Endothelial cell of umbilical vein (primary cell): ENCODE measurements at regions of chr1 and their contacts with region 1.

Region 1: DNA sequence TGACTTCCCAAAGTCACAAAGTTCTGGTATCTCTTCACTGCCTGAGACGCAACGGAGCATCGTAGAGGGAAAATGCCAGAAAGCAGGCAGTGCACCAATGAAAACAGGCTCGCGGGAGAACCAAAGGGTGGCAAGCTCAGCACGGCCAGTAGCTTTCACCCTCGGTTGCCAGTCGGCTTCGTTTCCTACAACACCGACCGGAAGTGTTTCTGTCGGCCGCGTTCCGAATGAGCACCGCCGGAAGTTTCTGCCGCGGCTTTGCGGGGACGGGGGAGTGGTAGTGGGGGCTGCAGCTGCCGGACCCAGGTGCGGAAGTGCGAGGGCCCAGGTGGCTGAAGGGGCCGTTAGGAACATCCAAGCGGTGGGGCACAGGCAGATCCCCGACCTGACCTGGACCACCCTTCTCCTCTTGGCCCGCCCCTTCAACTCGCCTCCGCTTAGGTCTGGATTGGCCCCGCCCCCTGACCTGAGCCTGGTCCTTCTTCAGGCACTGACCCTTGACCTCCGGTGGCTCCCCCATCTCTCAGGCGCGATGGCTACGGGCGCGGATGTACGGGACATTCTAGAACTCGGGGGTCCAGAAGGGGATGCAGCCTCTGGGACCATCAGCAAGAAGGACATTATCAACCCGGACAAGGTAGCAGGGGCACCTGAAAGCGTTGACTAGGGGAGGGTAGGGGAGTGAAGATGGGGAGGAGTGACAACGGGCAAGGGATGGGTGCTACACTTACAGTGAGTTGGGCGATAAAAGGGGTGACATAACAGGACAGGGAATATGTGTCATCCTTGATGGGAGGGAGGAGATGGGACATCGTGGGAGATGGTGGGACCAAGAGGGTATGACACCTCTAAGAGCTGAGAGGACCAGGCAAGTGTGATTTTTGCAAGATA is at the start of gene DMAP1:
- DNase-seq: peak; percentile 81
- H3K4me3 ChIP-seq: peak within 1 kb of the TSS; percentile 64 to 82 (median 76)
- H3K27ac ChIP-seq: no peak within 1 kb of the TSS
- H3K4me1 ChIP-seq: peaks cover 13% of the 10 kb centered on the region
- H3K27me3 ChIP-seq: no peaks in the 10 kb centered on the region
- CTCF ChIP-seq: no peak
- POLR2A ChIP-seq: peak; percentile 69
- total RNA-seq, gene DMAP1: 40.9 and 42.9 TPM in 2 replicates

Region 2: GRCh38 chr1:44002606-44003157 is 210.8 kb before region 1 on chr1:
- CTCF ChIA-PET with region 1: interaction called, 8 read pairs
- POLR2A ChIA-PET with region 1: no interaction called
- dilution Hi-C with region 1: no loop called
- intact Hi-C with region 1: loop called (anchors 10 kb)
- DNase-seq: no peak
- H3K4me3 ChIP-seq: no peak overlapping the region
- H3K27ac ChIP-seq: no peak overlapping the region
- H3K4me1 ChIP-seq: no peaks in the 10 kb centered on the region
- H3K27me3 ChIP-seq: no peaks in the 10 kb centered on the region
- CTCF ChIP-seq: peak in 1 of 2 donors; percentile 26
- POLR2A ChIP-seq: no peak

Region 3: GRCh38 chr1:44237721-44238457 is 24.4 kb after region 1 on chr1:
- CTCF ChIA-PET with region 1: interaction called, 39 read pairs
- POLR2A ChIA-PET with region 1: no interaction called
- dilution Hi-C with region 1: no loop called
- intact Hi-C with region 1: loop called (anchors 2 kb)
- DNase-seq: peak; percentile 40
- H3K4me3 ChIP-seq: no peak overlapping the region
- H3K27ac ChIP-seq: no peak overlapping the region
- H3K4me1 ChIP-seq: peaks cover 11% of the 10 kb centered on the region
- H3K27me3 ChIP-seq: no peaks in the 10 kb centered on the region
- CTCF ChIP-seq: peak; percentile 59 to 75
- POLR2A ChIP-seq: no peak

Region 4: DNA sequence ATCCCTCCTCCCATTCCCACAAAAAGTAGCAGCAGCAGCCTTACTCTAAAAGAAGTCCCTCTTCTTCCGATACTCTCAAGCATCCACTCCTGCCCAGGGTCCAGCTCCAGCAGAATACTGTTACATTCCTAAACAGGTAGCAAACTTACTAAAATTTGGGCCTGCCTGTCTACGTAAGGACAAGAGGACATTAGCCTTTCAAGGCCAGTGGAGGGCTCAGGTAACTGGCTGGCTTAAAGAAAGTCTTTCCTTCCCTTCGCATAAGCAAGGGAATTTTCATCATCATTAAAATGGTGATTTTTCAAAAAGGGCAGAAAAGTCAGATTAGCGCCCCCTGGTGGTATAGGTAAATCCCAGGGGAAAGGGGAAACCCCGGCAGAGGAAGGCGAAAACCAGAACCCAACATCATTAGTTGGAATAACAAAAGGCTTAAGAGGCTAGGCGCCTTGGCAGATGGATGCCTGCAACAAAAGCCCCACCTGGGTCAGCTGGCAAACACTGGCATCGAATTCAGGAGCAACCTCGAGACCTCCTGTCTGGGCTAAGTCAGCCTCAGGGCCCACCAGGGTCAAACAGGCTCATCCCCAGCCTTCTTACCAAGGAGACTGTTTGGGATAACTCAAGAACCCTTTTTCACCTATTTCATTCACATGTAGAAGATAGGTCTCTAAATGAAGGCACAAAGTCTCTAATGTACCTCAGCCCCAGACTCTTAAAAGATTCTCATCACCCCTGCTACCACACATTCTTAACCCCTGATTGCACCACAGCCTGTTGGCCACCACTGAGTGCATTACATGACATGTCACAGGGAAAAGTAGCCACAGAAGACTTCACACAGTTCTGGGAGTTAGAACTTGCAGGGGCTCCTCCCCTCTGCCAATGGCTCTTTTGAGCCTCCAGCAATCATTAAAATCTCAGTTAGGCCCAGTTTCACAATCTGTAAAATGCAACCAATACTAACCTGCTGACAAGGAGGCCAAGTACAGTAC is 104.9 kb after region 1 on chr1:
- CTCF ChIA-PET with region 1: interaction called, 25 read pairs
- POLR2A ChIA-PET with region 1: no interaction called
- dilution Hi-C with region 1: no loop called
- intact Hi-C with region 1: loop called (anchors 1 kb)
- DNase-seq: peak; percentile 33
- H3K4me3 ChIP-seq: no peak overlapping the region
- H3K27ac ChIP-seq: no peak overlapping the region
- H3K4me1 ChIP-seq: no peaks in the 10 kb centered on the region
- H3K27me3 ChIP-seq: no peaks in the 10 kb centered on the region
- CTCF ChIP-seq: peak; percentile 76 to 83
- POLR2A ChIP-seq: no peak

Region 5: DNA sequence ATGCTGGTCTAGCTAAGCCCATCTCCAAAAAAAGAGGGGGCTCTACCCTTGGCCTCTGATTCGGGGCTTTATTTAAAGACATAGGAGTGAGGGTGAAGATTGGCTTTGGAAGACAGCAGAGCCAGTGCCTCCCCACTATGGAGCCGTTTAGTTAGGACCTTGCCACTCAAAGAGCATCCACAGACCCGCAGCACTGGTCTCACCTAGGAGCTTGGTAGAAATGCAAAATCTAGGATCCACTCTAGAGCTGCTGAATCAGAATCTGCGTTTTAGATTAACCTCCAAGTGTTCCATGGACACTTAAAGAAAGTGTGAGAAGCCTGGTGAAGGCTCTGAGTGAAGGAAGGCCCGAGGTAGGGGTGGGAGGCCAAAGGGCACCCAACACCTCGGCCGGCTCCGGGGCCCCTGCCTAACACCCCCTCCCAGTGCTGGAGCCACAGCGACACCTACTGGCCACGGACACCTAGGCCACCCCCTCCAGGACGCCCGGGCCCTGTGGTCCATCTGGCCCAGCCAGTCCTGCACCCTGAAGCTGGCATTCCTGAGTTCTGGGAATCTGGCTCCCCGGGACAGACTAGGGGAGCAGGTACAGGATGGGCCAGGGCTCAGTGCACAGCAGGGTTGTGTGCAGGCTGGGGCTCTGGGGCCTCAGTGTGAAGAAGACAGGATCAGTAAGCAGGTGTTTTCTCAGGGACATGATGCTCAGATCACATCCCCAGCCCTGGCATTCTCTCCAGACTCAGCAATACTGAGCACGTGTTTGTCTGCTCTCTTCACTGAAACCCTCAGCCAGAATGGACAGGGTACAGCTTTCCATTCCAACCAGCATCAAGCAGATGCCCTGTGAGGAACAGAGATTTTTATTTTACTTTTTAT is 381.6 kb after region 1 on chr1:
- CTCF ChIA-PET with region 1: interaction called, 27 read pairs
- POLR2A ChIA-PET with region 1: no interaction called
- dilution Hi-C with region 1: no loop called
- intact Hi-C with region 1: loop called (anchors 1 kb)
- DNase-seq: peak; percentile 42
- H3K4me3 ChIP-seq: no peak overlapping the region
- H3K27ac ChIP-seq: no peak overlapping the region
- H3K4me1 ChIP-seq: no peaks in the 10 kb centered on the region
- H3K27me3 ChIP-seq: peaks cover 0 to 7% of the 10 kb centered on the region in 2 experiments
- CTCF ChIP-seq: peak; percentile 86 to 94
- POLR2A ChIP-seq: no peak